Activated naive CD4-positive, alpha-beta T cell treated with anti-CD3 and anti-CD28 coated beads, Interleukin-2, amount 10 ng/mL, durations not matched to agents 7 days and 5 days (primary cell): ENCODE measurements at regions of chr5 and their contacts with region 1.

Region 1: GRCh38 chr5:151115274-151115905 is 34.6 kb upstream of the TNIP1 start:
- DNase-seq: peak; percentile 80
- H3K4me3 Mint-ChIP-seq: no peak overlapping the region
- H3K27ac Mint-ChIP-seq: peak overlapping the region; percentile 38
- H3K4me1 Mint-ChIP-seq: no peaks in the 10 kb centered on the region
- H3K27me3 Mint-ChIP-seq: no peaks in the 10 kb centered on the region

Region 2: GRCh38 chr5:151002250-151002649 is 113.1 kb before region 1 on chr5:
- CTCF ChIA-PET with region 1: interaction called, 13 read pairs
- DNase-seq: no peak
- H3K4me3 Mint-ChIP-seq: no peak overlapping the region
- H3K27ac Mint-ChIP-seq: no peak overlapping the region
- H3K4me1 Mint-ChIP-seq: no peaks in the 10 kb centered on the region
- H3K27me3 Mint-ChIP-seq: peaks cover 14% of the 10 kb centered on the region

Region 3: GRCh38 chr5:151058891-151059489 is 56.4 kb before region 1 on chr5:
- CTCF ChIA-PET with region 1: interaction called, 264 read pairs
- DNase-seq: no peak
- H3K4me3 Mint-ChIP-seq: no peak overlapping the region
- H3K27ac Mint-ChIP-seq: peak overlapping the region; percentile 83
- H3K4me1 Mint-ChIP-seq: peaks cover 26% of the 10 kb centered on the region
- H3K27me3 Mint-ChIP-seq: peaks cover 4% of the 10 kb centered on the region

Region 4: GRCh38 chr5:151080623-151081430 is 34.6 kb before region 1 on chr5 and contains the start of gene TNIP1:
- CTCF ChIA-PET with region 1: interaction called, 27 read pairs
- DNase-seq: peak; percentile 94
- H3K4me3 Mint-ChIP-seq: peak within 1 kb of the TSS; percentile 79
- H3K27ac Mint-ChIP-seq: peak within 1 kb of the TSS; percentile 93
- H3K4me1 Mint-ChIP-seq: peaks cover 80% of the 10 kb centered on the region
- H3K27me3 Mint-ChIP-seq: no peaks in the 10 kb centered on the region

Region 5: GRCh38 chr5:151097786-151098498 is 17.4 kb before region 1 on chr5:
- CTCF ChIA-PET with region 1: interaction called, 43 read pairs
- DNase-seq: peak; percentile 35
- H3K4me3 Mint-ChIP-seq: no peak overlapping the region
- H3K27ac Mint-ChIP-seq: peak overlapping the region; percentile 61
- H3K4me1 Mint-ChIP-seq: peaks cover 78% of the 10 kb centered on the region
- H3K27me3 Mint-ChIP-seq: no peaks in the 10 kb centered on the region

Region 6: GRCh38 chr5:151126199-151126645 is 10.8 kb after region 1 on chr5:
- CTCF ChIA-PET with region 1: interaction called, 42 read pairs
- DNase-seq: peak; percentile 71
- H3K4me3 Mint-ChIP-seq: no peak overlapping the region
- H3K27ac Mint-ChIP-seq: peak overlapping the region; percentile 84
- H3K4me1 Mint-ChIP-seq: peaks cover 42% of the 10 kb centered on the region
- H3K27me3 Mint-ChIP-seq: no peaks in the 10 kb centered on the region

Region 7: DNA sequence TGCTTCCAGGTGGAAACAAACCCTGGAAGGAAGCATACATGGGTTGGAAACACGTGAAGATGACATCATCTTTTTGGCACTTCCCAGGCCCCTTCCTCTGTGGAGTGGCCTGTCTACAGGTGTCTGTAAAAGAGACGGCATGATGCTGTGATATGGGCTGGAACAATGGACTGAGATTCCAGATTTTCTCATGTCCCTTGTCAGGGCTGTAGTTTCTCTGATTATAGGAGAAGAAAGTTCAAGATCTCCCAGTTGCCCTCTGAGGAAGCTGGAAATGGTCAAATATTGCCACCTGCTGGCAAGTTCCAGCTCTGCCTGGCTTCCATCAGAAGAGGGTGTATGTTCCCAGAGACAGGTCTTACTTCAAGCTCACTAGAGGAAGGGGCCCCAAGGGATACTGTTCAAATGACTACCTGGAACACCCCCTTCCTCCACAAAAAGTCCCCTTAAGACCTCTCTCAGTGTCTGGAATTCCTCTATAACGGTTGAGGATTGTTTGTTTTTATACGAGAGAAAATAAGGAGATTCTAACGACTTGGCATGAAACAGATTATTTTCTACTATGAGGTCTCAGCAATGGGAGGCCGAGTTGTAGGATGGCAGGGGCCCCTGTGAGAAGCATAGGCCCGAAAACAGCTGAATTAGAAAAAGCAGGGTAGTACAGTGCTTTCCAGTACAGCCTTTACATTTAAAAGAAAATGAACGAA is 49.4 kb after region 1 on chr5:
- CTCF ChIA-PET with region 1: interaction called, 125 read pairs
- DNase-seq: peak; percentile 88
- H3K4me3 Mint-ChIP-seq: no peak overlapping the region
- H3K27ac Mint-ChIP-seq: no peak overlapping the region
- H3K4me1 Mint-ChIP-seq: peaks cover 7% of the 10 kb centered on the region
- H3K27me3 Mint-ChIP-seq: peaks cover 21% of the 10 kb centered on the region